ENCODE measurements at regions of chr5 and their contacts with region 1.

Region 1: GRCh38 chr5:149860801-149861322 is 83.7 kb downstream of the PDE6A start:
- DNase-seq: peak; percentile 73
- H3K4me3 Mint-ChIP-seq: peak overlapping the region; percentile 8
- H3K27ac Mint-ChIP-seq: peak overlapping the region; percentile 30
- H3K4me1 Mint-ChIP-seq: peaks cover 8% of the 10 kb centered on the region
- H3K27me3 Mint-ChIP-seq: no peaks in the 10 kb centered on the region

Region 2: GRCh38 chr5:149845601-149846000 is 15.3 kb before region 1 on chr5:
- intact Hi-C with region 1: loop called (anchors 1 kb)
- DNase-seq: no peak
- H3K4me3 Mint-ChIP-seq: no peak overlapping the region
- H3K27ac Mint-ChIP-seq: no peak overlapping the region
- H3K4me1 Mint-ChIP-seq: no peaks in the 10 kb centered on the region
- H3K27me3 Mint-ChIP-seq: no peaks in the 10 kb centered on the region

Region 3: GRCh38 chr5:149938791-149939358 is 78.0 kb after region 1 on chr5:
- intact Hi-C with region 1: no loop called
- DNase-seq: no peak
- H3K4me3 Mint-ChIP-seq: no peak overlapping the region
- H3K27ac Mint-ChIP-seq: no peak overlapping the region
- H3K4me1 Mint-ChIP-seq: peaks cover 6% of the 10 kb centered on the region
- H3K27me3 Mint-ChIP-seq: peaks cover 5% of the 10 kb centered on the region